Endothelial cell of umbilical vein (primary cell): ENCODE measurements at regions of chr13 and their contacts with region 1.

Region 1: GRCh38 chr13:27374650-27375049 is 49.8 kb upstream of the GTF3A start:
- DNase-seq: peak; percentile 73
- H3K4me3 ChIP-seq: no peak overlapping the region
- H3K27ac ChIP-seq: no peak overlapping the region
- H3K4me1 ChIP-seq: no peaks in the 10 kb centered on the region
- H3K27me3 ChIP-seq: peaks cover 6 to 10% of the 10 kb centered on the region in 2 experiments
- CTCF ChIP-seq: peak; percentile 67 to 75
- POLR2A ChIP-seq: no peak

Region 2: GRCh38 chr13:27449936-27450828 is 75.5 kb after region 1 on chr13 and contains the start of gene MTIF3:
- CTCF ChIA-PET with region 1: interaction called, 3 read pairs
- POLR2A ChIA-PET with region 1: no interaction called
- dilution Hi-C with region 1: no loop called
- intact Hi-C with region 1: loop called (anchors 2 kb)
- DNase-seq: peak; percentile 92
- H3K4me3 ChIP-seq: peak within 1 kb of the TSS; percentile 68 to 90 (median 82)
- H3K27ac ChIP-seq: peak within 1 kb of the TSS; percentile 55
- H3K4me1 ChIP-seq: peaks cover 21% of the 10 kb centered on the region
- H3K27me3 ChIP-seq: peaks cover 7 to 20% of the 10 kb centered on the region in 2 experiments
- CTCF ChIP-seq: no peak
- POLR2A ChIP-seq: peak; percentile 77
- total RNA-seq, gene MTIF3: 23.5 and 36.1 TPM in 2 replicates